Naive thymus-derived CD4-positive, alpha-beta T cell (primary cell): ENCODE measurements at regions of chr4 and their contacts with region 1.

Region 1: DNA sequence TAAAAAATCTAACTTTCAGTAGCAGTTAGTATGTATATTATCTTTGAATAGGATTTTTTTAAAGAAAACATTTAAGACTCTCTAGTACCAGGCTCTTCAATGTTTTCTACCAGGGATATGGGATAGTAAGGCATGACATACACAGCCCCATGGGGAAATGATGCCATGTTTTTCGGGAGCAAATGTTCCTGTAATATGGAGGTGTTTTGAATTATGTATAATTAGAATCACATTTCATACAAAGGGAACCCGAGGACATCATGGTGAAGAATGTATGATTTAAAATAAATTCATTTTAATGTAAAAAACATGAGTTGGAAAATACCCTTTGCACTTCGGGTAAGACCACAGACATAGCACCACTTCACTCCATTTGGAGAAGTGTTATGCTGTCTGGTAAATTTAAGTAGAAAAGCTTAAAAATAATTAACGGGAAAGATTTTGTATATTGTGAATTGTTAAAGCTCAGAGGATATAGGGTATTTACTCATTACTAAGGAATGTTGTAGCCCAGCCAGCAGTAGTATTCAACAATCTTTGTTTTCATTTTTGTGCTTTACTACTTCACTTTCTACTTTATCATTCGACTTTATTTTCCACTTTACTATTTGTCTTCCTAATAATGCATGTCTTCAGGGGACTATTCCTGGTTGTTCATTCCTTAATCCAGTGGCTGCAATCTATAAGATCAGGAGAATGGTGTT is 2050.7 kb downstream of the ARAP2 start:
- DNase-seq: no peak
- ATAC-seq: no peak
- H3K4me3 ChIP-seq: no peak overlapping the region
- H3K4me3 Mint-ChIP-seq: no peak overlapping the region
- H3K27ac ChIP-seq: no peak overlapping the region
- H3K27ac Mint-ChIP-seq: no peak overlapping the region
- H3K4me1 ChIP-seq: no peaks in the 10 kb centered on the region
- H3K4me1 Mint-ChIP-seq: no peaks in the 10 kb centered on the region
- H3K27me3 ChIP-seq: no peaks in the 10 kb centered on the region
- H3K27me3 Mint-ChIP-seq: no peaks in the 10 kb centered on the region

Region 2: GRCh38 chr4:33160126-33160525 is 1033.5 kb before region 1 on chr4:
- CTCF ChIA-PET with region 1: no interaction called
- POLR2A ChIA-PET with region 1: no interaction called
- intact Hi-C with region 1: no loop called
- DNase-seq: no peak
- ATAC-seq: no peak
- H3K4me3 ChIP-seq: no peak overlapping the region
- H3K4me3 Mint-ChIP-seq: no peak overlapping the region
- H3K27ac ChIP-seq: no peak overlapping the region
- H3K27ac Mint-ChIP-seq: no peak overlapping the region
- H3K4me1 ChIP-seq: no peaks in the 10 kb centered on the region
- H3K4me1 Mint-ChIP-seq: no peaks in the 10 kb centered on the region
- H3K27me3 ChIP-seq: no peaks in the 10 kb centered on the region
- H3K27me3 Mint-ChIP-seq: no peaks in the 10 kb centered on the region

Region 3: DNA sequence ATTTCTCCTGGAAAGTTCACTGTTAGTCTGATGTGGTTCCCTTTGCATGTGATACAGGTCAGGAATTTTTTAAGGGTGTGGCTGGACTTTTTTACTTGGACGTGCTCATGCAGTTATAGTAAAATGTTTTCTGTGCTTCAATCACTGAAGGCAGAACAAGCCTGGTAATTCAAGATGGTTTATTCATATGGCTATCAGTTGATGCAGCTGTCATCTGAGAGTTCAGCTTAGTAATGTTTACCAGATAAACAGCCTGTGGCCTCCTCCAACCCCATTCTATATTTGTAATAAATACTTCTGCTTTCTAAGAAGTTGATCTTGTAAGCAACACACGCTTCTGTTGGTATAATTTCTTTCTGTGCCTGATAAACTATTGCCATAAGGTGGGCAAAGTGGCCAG is 55.2 kb before region 1 on chr4:
- CTCF ChIA-PET with region 1: no interaction called
- POLR2A ChIA-PET with region 1: no interaction called
- intact Hi-C with region 1: no loop called
- DNase-seq: no peak
- ATAC-seq: no peak
- H3K4me3 ChIP-seq: no peak overlapping the region
- H3K4me3 Mint-ChIP-seq: no peak overlapping the region
- H3K27ac ChIP-seq: no peak overlapping the region
- H3K27ac Mint-ChIP-seq: no peak overlapping the region
- H3K4me1 ChIP-seq: no peaks in the 10 kb centered on the region
- H3K4me1 Mint-ChIP-seq: no peaks in the 10 kb centered on the region
- H3K27me3 ChIP-seq: no peaks in the 10 kb centered on the region
- H3K27me3 Mint-ChIP-seq: no peaks in the 10 kb centered on the region

Region 4: DNA sequence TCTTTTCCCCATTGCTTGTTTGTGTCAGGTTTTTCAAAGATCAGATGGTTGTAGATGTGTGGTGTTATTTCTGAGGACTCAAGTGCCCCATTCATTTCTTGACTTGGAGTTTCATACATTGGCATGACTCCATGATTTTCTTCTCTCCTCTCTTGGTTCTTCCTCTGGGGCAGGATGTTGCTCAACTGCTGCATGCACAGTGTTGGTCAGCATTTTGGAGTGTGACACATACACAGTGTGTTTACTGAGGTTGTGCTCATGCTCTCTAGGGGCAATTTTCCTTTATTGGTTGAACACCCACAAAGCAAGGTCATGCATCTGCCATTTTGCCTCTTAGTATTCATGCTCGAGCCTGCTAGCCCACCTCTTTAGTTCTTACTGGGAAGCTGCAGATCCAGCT is 57.0 kb after region 1 on chr4:
- CTCF ChIA-PET with region 1: no interaction called
- POLR2A ChIA-PET with region 1: no interaction called
- intact Hi-C with region 1: loop called in 1 of 2 experiments (anchors 10 kb)
- DNase-seq: no peak
- ATAC-seq: no peak
- H3K4me3 ChIP-seq: no peak overlapping the region
- H3K4me3 Mint-ChIP-seq: no peak overlapping the region
- H3K27ac ChIP-seq: no peak overlapping the region
- H3K27ac Mint-ChIP-seq: no peak overlapping the region
- H3K4me1 ChIP-seq: no peaks in the 10 kb centered on the region
- H3K4me1 Mint-ChIP-seq: no peaks in the 10 kb centered on the region
- H3K27me3 ChIP-seq: no peaks in the 10 kb centered on the region
- H3K27me3 Mint-ChIP-seq: no peaks in the 10 kb centered on the region